ENCODE measurements at regions of chr2 and their contacts with region 1.

Region 1: GRCh38 chr2:120589771-120590608 is 145.7 kb upstream of the GLI2 start:
- DNase-seq: no peak
- ATAC-seq: no peak

Region 2: DNA sequence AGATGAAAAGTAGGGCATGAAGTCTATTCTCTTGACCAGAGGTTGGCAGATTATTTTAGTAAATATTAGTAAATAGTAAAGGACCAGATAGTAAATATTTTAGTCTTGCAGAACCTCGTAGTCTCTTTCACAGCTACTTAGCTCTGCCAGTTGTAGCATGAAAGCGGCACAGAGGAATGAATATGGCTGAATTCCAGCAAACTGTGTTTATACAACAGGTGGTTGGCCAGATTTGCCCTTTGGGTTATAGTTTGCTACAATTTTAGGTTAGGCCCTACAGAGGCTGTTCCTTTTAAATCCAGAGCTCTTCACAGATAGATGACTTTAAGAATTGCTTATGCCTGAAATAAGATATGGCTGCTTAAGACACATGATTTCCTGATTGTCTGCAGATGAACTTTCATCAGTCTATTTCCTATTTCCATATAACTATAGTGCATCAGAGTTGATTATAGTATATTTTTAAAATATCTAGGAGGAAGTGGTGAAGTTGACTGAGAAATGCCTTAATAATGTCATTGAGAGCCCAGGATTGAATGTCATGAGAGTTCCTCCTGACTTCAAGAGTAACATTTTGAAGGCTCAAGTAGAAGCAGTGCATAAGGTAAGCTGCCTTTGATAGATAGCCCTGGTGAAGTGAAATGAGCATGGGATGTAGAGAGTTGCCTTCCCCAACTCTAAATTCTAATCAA is 447.3 kb before region 1 on chr2:
- intact Hi-C with region 1: no loop called
- DNase-seq: no peak
- ATAC-seq: no peak

Region 3: DNA sequence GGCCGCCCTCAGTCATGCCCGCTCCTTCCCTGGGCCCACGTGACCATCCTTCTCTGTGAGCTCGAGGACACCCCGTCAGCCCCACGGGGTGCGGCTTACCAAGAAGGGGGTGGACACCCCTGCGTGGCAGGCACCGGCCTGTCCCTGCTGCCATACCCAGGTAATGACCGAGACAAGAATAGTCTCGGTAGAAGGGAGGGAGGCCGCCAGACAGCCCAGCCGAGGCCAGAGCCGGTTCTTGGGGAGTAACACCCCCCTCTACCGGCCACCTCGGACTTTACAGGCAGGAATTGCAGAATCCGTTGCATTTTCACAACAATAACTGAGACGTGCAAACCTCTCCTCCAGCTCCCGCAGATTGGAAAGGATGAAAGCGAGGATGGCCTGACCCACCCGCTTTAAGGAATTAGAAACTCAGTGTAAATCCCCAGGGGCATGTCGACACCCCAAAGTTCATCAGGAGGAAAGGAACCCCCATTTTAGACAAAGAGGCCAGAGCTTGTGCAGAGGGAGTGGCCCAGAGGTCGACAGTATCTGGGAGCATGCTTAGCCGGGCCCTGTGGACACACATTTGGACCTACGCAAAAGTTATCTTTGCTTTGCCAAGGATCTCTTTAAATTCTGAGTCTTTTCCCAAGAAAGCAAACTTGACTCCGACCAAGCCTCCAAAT is 85.6 kb after region 1 on chr2:
- intact Hi-C with region 1: loop called (anchors 10 kb)
- DNase-seq: peak; percentile 76
- ATAC-seq: peak; percentile 67